ENCODE measurements at regions of chr11 and their contacts with region 1.

Region 1: GRCh38 chr11:24697722-24698121 is 200.9 kb downstream of the LUZP2 start:
- DNase-seq: no peak
- H3K4me3 ChIP-seq: no peak overlapping the region
- H3K27ac ChIP-seq: no peak overlapping the region
- H3K4me1 ChIP-seq: no peaks in the 10 kb centered on the region
- H3K27me3 ChIP-seq: no peaks in the 10 kb centered on the region
- CTCF ChIP-seq: no peak
- POLR2A ChIP-seq: no peak

Region 2: DNA sequence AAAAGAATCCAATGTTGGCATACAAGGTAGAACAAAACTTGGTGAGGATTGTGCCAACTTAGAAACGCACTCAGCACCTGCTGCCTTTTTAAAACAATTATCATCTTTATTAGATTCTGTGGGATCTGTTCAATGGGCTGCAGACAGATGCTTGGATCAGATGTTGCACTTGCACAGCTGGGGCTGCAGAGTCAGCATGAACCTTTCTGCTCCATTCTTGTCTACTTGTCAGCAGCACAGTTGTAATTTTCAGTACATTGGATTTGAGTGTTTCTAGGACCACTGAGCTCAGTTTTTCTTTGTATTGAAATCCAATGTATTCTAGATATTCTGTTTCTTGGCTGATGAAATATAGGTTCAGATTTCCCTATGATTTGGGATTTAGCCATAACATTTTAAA is 36.4 kb before region 1 on chr11:
- intact Hi-C with region 1: loop called (anchors 2 kb)
- DNase-seq: no peak
- H3K4me3 ChIP-seq: no peak overlapping the region
- H3K27ac ChIP-seq: no peak overlapping the region
- H3K4me1 ChIP-seq: no peaks in the 10 kb centered on the region
- H3K27me3 ChIP-seq: no peaks in the 10 kb centered on the region
- CTCF ChIP-seq: no peak
- POLR2A ChIP-seq: no peak

Region 3: DNA sequence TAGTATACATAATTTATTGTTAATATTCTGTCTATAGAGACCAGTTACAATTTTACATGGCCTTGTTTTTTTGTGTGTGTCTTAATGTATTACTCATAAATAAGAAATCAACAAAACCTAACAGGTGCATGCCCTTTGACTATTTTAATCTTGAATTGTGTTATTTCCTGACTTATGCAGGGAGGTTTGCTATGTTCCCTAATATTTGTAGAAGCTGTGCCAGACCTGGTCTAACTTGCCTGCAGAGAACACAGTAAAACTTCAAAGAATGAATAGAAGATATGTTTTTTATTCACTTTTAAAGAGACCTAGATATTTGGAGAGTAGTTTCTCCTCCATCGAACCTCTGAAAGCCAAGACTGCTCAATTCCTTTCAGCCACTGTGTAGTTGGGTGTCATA is 33.8 kb after region 1 on chr11:
- intact Hi-C with region 1: no loop called
- DNase-seq: no peak
- H3K4me3 ChIP-seq: no peak overlapping the region
- H3K27ac ChIP-seq: no peak overlapping the region
- H3K4me1 ChIP-seq: no peaks in the 10 kb centered on the region
- H3K27me3 ChIP-seq: no peaks in the 10 kb centered on the region
- CTCF ChIP-seq: no peak
- POLR2A ChIP-seq: no peak

Measured in breast epithelium (tissue), 4 donors.